Endothelial cell of umbilical vein (primary cell): ENCODE measurements at regions of chr2 and their contacts with region 1.

Region 1: DNA sequence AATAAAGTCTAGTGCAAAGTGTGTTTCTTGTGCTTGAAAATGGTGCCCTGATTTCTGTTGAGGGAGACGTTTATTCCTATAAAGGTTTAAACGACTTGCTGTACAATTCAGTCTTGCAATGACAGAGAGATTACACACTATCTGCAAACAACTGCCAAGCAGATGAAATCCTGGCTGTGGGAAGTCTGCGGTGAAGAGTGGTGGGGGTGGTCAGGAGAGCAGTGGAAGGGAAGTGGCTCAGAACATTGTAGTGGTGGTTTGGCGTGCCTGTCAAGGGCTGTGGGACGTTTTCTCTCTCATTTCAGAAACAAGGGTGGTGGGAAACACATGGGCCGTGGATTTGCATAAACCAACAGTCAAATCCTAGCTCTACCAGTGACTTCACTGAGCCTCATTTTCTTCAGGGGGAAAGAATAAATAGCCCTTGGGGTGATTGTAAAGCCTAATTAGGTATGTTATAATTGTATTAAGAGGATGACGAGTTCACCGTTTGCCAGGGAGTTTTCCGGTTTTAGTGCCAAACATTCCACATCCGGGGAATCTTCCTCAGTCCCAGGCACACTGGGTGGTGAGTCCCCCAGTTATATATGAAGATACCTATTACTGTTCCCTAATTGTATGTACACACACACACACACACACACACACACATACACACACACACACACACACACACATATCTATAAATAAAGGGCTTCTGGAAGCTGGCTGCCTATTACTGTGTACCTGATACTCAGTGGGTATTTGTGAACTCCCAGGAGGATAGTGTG is 115.0 kb downstream of the SPTBN1 start:
- DNase-seq: peak; percentile 84
- H3K4me3 ChIP-seq: no peak overlapping the region
- H3K27ac ChIP-seq: peak overlapping the region; percentile 100
- H3K4me1 ChIP-seq: peaks cover 66% of the 10 kb centered on the region
- H3K27me3 ChIP-seq: no peaks in the 10 kb centered on the region
- CTCF ChIP-seq: no peak
- POLR2A ChIP-seq: no peak

Region 2: DNA sequence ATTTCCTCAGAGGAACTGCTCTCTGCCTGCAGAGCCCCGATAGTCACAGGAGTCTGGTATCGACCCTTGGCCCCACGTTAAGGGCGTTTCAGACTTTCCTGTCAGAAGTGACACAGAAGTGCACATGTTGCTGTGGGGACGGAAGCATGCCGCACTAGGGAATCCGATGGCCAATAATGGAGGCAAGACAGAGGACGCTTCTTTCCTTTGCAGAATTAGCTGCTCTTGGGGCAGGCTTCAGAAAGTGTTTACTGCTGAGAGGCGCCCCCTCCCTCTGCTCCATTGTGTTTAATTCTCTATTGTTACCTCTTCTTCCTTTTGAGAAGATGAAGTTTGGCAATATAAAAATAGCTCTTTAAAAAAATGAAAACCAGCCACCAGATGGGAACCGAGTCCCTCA is 33.8 kb after region 1 on chr2:
- CTCF ChIA-PET with region 1: interaction called, 5 read pairs
- POLR2A ChIA-PET with region 1: no interaction called
- dilution Hi-C with region 1: no loop called
- intact Hi-C with region 1: loop called (anchors 2 kb)
- DNase-seq: peak; percentile 85
- H3K4me3 ChIP-seq: no peak overlapping the region
- H3K27ac ChIP-seq: peak overlapping the region; percentile 72
- H3K4me1 ChIP-seq: peaks cover 53% of the 10 kb centered on the region
- H3K27me3 ChIP-seq: no peaks in the 10 kb centered on the region
- CTCF ChIP-seq: no peak
- POLR2A ChIP-seq: peak; percentile 43

Region 3: GRCh38 chr2:54891909-54892308 is 320.8 kb after region 1 on chr2:
- CTCF ChIA-PET with region 1: no interaction called
- POLR2A ChIA-PET with region 1: no interaction called
- dilution Hi-C with region 1: no loop called
- intact Hi-C with region 1: no loop called
- DNase-seq: no peak
- H3K4me3 ChIP-seq: no peak overlapping the region
- H3K27ac ChIP-seq: no peak overlapping the region
- H3K4me1 ChIP-seq: no peaks in the 10 kb centered on the region
- H3K27me3 ChIP-seq: peaks cover 13 to 17% of the 10 kb centered on the region in 2 experiments
- CTCF ChIP-seq: no peak
- POLR2A ChIP-seq: no peak